ENCODE measurements at regions of chr5 and their contacts with region 1.

Region 1: DNA sequence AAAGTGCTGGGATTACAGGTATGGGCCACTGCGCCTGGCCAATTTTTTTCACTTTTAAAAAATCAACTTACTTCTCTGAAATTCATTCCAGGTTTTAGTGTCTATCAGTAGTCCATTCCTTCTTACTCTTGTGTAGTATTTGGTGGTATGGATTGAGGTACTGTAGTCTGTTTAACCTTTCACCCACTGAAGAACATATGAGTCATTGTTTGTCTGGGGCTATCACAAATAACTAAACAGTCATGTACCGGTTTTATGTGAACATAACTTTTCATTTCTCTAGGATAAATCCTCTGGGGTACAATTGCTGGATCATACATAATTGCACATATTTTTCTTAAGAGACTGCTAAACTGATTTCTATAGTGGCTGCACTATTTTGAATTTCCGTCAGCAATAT is 1188.0 kb upstream of the CDH9 start:
- DNase-seq: no peak
- H3K4me3 ChIP-seq: no peak overlapping the region
- H3K27ac ChIP-seq: no peak overlapping the region
- H3K4me1 ChIP-seq: peaks cover 6% of the 10 kb centered on the region; the same call in 1 of the 2 replicates
- H3K27me3 ChIP-seq: no peaks in the 10 kb centered on the region
- CTCF ChIP-seq: no peak

Region 2: DNA sequence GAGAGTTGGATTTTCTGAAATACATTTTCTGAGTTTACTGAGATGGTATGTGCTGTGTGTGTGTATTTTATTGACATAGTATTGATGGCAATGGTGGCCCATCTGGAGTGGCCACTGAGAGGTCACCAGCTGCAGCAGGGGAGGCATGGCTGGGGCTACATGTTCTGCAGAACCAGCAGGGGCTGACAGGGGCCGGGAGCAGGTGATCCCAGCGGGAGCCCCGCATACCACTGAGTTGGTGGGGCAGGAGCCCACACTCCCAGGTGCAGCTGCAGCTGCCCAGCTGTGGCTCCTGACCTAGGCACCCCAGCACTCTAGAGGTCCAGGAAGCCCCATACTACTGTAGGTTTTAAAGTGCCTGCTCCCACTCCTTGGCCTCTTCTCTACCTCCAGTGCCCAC is 143.8 kb before region 1 on chr5:
- CTCF ChIA-PET with region 1: no interaction called
- POLR2A ChIA-PET with region 1: no interaction called
- intact Hi-C with region 1: no loop called
- DNase-seq: no peak
- H3K4me3 ChIP-seq: no peak overlapping the region
- H3K27ac ChIP-seq: no peak overlapping the region
- H3K4me1 ChIP-seq: no peaks in the 10 kb centered on the region
- H3K27me3 ChIP-seq: no peaks in the 10 kb centered on the region
- CTCF ChIP-seq: no peak

Region 3: DNA sequence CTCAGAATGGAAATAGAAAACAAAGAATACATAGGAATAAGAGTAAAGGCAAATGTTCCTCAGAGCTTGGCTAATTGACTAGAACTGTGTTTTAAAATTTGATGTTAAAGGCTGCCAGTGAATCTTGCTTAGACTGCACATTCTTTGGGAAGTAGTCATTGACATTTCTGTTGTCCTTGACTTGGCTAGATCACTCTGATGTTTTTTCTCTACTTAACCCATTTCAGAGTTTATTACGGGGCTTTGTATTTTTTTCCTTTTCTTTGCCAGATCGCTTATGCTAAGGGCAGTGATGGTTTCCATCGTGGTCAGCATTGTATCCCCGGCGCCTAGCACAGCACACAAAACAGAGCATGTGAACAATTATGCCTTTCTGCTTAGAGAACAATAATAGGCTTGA is 61.3 kb before region 1 on chr5:
- CTCF ChIA-PET with region 1: no interaction called
- POLR2A ChIA-PET with region 1: no interaction called
- intact Hi-C with region 1: no loop called
- DNase-seq: no peak
- H3K4me3 ChIP-seq: no peak overlapping the region
- H3K27ac ChIP-seq: no peak overlapping the region
- H3K4me1 ChIP-seq: no peaks in the 10 kb centered on the region
- H3K27me3 ChIP-seq: no peaks in the 10 kb centered on the region
- CTCF ChIP-seq: no peak

Region 4: GRCh38 chr5:28344803-28345433 is 118.5 kb after region 1 on chr5:
- CTCF ChIA-PET with region 1: no interaction called
- POLR2A ChIA-PET with region 1: interaction called, 10 read pairs
- intact Hi-C with region 1: no loop called
- DNase-seq: no peak
- H3K4me3 ChIP-seq: no peak overlapping the region
- H3K27ac ChIP-seq: no peak overlapping the region
- H3K4me1 ChIP-seq: no peaks in the 10 kb centered on the region
- H3K27me3 ChIP-seq: no peaks in the 10 kb centered on the region
- CTCF ChIP-seq: peak; percentile 84